Motor neuron (in vitro differentiated cells): ENCODE measurements at regions of chr7 and their contacts with region 1.

Region 1: DNA sequence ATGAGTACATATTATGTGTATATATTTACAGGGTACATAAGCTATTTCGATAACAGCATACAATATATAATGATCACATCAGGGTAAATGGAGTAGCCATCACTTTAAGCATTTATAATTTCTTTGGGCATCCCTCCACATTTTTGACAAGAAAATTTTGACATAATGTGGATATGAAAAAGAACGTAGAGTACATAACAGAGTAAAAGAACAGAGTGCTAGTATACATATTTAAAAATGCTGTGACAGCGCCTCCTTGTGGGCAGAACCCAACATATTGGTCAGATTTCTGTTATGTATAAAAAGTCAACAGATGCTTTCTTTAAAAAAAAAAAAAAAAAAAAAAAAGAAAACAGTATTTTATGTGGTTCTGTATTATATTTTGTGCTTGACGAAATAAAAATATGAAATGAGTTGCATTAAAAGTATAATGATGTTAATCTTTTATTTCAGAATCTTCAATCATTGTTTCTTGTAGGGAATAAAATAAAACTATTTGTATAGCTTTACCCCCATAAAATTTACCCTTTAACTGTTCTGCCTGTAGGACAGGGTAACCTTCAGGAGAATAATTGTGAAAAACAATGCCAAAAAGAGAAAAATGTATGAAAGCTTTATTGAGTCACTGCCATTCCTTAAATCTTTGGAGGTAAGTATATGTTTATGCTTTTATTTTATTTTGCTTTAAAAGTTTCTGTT is 18.3 kb upstream of the HBP1 start:
- ATAC-seq: peak in 7 of 8 experiments; percentile 51 to 84 (median 60)
- H3K4me3 ChIP-seq: no peak overlapping the region
- H3K27ac ChIP-seq: no peak overlapping the region
- H3K4me1 ChIP-seq: peaks cover 14 to 16% of the 10 kb centered on the region in 2 donors

Region 2: GRCh38 chr7:106793015-106793975 is 357.2 kb before region 1 on chr7:
- in situ Hi-C with region 1: loop called in 6 of 9 experiments (anchors 5 to 25 kb)
- ATAC-seq: peak in 3 of 8 experiments; percentile 20 to 53 (median 30)
- H3K4me3 ChIP-seq: no peak overlapping the region
- H3K27ac ChIP-seq: no peak overlapping the region
- H3K4me1 ChIP-seq: no peaks in the 10 kb centered on the region

Region 3: DNA sequence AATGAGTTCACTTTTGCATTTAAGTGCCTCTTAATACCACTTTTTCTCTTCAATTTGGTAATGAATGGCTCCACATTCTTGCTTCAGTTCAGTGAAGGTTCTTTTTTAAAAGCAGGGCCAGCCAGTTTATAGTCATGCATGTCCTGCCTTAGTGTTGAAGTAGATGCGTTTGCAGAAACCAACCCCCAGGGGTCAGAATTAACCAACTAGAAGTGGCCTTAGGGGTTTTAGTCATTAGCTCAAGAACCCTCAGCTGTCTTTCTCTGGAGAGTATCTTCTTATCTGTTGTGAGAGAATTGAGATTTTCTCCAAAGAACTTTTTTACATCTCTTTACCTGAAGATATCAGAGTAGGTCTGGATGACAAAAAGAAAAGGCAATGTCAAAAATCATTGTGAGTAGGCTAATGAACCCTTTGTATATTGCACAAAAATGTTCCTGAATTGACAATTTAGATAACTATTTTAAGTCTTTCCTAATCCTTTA is 203.2 kb before region 1 on chr7:
- in situ Hi-C with region 1: loop called in 8 of 9 experiments (anchors 10 to 25 kb)
- ATAC-seq: peak; percentile 79 to 97 (median 90)
- H3K4me3 ChIP-seq: no peak overlapping the region
- H3K27ac ChIP-seq: no peak overlapping the region
- H3K4me1 ChIP-seq: peaks cover 0 to 7% of the 10 kb centered on the region in 2 donors

Region 4: DNA sequence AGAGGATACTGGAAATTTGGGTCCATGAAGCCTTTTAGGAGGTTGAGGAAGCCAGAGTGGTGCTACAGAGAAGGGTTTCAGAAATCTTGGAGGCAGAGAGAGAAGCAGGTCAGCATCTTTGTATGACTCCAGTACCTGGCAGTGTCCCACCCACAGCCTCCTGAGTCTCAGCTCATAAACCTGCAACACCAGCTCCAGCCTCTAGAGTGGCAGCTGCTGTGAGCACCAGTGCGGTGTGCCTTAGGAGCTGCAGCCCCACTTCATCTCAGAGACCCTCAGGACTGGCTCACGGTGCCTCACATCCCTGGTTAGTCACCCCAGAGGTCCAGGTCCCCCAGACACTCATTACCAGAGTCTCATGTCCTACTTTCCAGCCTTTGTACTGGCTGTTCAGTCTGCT is 190.8 kb before region 1 on chr7:
- in situ Hi-C with region 1: loop called in 5 of 9 experiments (anchors 10 to 25 kb)
- ATAC-seq: peak in 3 of 8 experiments; percentile 23 to 73 (median 31)
- H3K4me3 ChIP-seq: no peak overlapping the region
- H3K27ac ChIP-seq: no peak overlapping the region
- H3K4me1 ChIP-seq: peaks cover 7 to 8% of the 10 kb centered on the region in 2 donors